CD4-positive, alpha-beta T cell (primary cell): ENCODE measurements at regions of chr16 and their contacts with region 1.

Region 1: GRCh38 chr16:82681592-82681991 is 54.8 kb downstream of the CDH13 start:
- DNase-seq: no peak
- ATAC-seq: no peak
- H3K4me3 ChIP-seq: no peak overlapping the region
- H3K4me3 Mint-ChIP-seq: no peak overlapping the region
- H3K27ac ChIP-seq: no peak overlapping the region
- H3K27ac Mint-ChIP-seq: no peak overlapping the region
- H3K4me1 ChIP-seq: no peaks in the 10 kb centered on the region
- H3K4me1 Mint-ChIP-seq: no peaks in the 10 kb centered on the region
- H3K27me3 ChIP-seq: no peaks in the 10 kb centered on the region
- H3K27me3 Mint-ChIP-seq: peaks cover 10% of the 10 kb centered on the region
- CTCF ChIP-seq: no peak

Region 2: DNA sequence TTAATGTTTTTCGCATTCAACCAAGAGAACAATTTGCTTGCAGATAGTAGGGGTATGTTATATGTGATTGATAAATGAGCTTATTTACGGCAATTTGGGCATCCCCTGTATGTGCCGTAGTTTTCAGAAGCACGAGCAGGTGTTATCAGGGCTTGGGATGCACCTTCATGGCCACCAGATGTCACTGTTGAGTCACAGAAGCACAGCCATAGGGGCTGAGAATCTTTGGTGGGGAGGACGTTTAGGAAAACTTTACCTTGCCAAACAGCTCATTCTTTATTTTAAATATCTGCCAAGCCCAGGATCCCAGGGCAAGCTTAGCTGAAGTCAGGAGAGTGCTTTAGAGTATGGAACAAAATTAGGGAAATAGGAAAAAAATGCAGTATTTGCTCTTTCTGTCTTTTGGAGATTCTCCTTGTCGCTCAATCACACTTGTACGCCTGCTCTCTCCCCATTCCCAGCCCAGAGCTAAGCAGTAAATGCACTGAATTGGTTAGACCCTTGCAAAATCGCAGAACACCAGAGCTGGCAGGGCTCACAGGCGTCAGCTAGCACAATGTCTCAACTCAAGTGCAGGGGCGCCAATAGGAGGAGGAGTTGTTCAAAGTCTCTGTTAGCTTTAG is 418.0 kb before region 1 on chr16:
- CTCF ChIA-PET with region 1: no interaction called
- POLR2A ChIA-PET with region 1: no interaction called
- intact Hi-C with region 1: loop called in 1 of 2 experiments (anchors 10 kb)
- DNase-seq: peak; percentile 7 to 77 (median 28)
- ATAC-seq: no peak
- H3K4me3 ChIP-seq: no peak overlapping the region
- H3K4me3 Mint-ChIP-seq: no peak overlapping the region
- H3K27ac ChIP-seq: no peak overlapping the region
- H3K27ac Mint-ChIP-seq: no peak overlapping the region
- H3K4me1 ChIP-seq: no peaks in the 10 kb centered on the region
- H3K4me1 Mint-ChIP-seq: no peaks in the 10 kb centered on the region
- H3K27me3 ChIP-seq: no peaks in the 10 kb centered on the region
- H3K27me3 Mint-ChIP-seq: peaks cover 34% of the 10 kb centered on the region
- CTCF ChIP-seq: peak; percentile 86